Gastrocnemius medialis (tissue), 4 donors: ENCODE measurements at regions of chr2 and their contacts with region 1.

Region 1: GRCh38 chr2:191051825-191052778 is 38.1 kb upstream of the STAT1 start:
- DNase-seq: no peak
- ATAC-seq: no peak
- H3K4me3 ChIP-seq: no peak overlapping the region
- H3K27ac ChIP-seq: no peak overlapping the region
- H3K4me1 ChIP-seq: no peaks in the 10 kb centered on the region
- H3K27me3 ChIP-seq: no peaks in the 10 kb centered on the region
- CTCF ChIP-seq: peak in 4 of 5 experiments; percentile 21 to 43 (median 27)
- POLR2A ChIP-seq: no peak

Region 2: DNA sequence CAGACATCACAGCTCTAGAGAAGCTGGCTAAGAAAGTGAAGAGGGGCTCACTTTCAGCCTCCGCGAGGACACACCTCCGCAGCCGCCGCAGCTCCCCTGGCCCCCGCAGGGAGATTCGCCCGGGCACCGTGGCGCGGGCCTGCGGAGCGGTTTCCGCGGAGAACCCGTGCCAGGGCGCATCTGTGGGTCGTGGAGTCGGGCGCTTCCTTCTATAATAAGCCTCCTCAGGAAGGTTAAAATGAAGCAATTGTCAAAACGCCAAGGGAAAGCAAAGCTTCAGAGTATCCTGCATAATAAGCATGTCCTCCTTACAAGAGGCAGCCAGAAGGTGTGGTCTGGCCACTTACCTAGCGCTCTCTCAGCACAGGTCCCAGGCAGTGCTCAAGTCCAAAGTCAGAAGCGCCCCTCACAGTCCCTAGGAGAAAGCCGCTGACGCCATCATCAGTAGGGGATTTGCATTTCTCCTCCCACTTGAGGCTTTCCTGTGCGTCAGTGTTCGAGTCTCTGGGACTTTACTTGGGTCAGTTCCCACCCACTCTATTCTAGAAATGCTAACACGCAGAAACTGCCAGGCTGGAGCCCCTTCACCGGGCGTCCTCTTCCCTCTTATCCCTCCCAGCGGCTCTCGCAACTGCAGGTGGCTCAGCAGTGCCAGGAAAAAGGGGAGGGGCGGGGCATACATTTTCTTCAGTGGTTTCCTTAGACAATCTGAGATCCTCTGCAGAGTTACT is 98.7 kb after region 1 on chr2 and contains the start of gene STAT4:
- in situ Hi-C with region 1: no loop called
- intact Hi-C with region 1: loop called (anchors 10 kb)
- DNase-seq: peak; percentile 8 to 21
- ATAC-seq: no peak
- H3K4me3 ChIP-seq: peak within 1 kb of the TSS; percentile 42 to 71 (median 51)
- H3K27ac ChIP-seq: no peak within 1 kb of the TSS
- H3K4me1 ChIP-seq: no peaks in the 10 kb centered on the region
- H3K27me3 ChIP-seq: no peaks in the 10 kb centered on the region
- CTCF ChIP-seq: no peak
- POLR2A ChIP-seq: peak in 1 of 2 donors; percentile 19
- total RNA-seq, gene STAT4: 0.31 to 1.0 (median 0.73) TPM in 3 of 4 donors, not detected in the other